ENCODE measurements at regions of chr15 and their contacts with region 1.

Region 1: GRCh38 chr15:71448688-71449114 is 333.4 kb downstream of the THSD4 start:
- DNase-seq: no peak
- H3K4me3 ChIP-seq: no peak overlapping the region
- H3K27ac ChIP-seq: peak overlapping the region; percentile 51
- H3K4me1 ChIP-seq: peaks cover 25% of the 10 kb centered on the region
- H3K27me3 ChIP-seq: no peaks in the 10 kb centered on the region
- CTCF ChIP-seq: peak; percentile 72 to 86 (median 81)
- POLR2A ChIP-seq: no peak

Region 2: DNA sequence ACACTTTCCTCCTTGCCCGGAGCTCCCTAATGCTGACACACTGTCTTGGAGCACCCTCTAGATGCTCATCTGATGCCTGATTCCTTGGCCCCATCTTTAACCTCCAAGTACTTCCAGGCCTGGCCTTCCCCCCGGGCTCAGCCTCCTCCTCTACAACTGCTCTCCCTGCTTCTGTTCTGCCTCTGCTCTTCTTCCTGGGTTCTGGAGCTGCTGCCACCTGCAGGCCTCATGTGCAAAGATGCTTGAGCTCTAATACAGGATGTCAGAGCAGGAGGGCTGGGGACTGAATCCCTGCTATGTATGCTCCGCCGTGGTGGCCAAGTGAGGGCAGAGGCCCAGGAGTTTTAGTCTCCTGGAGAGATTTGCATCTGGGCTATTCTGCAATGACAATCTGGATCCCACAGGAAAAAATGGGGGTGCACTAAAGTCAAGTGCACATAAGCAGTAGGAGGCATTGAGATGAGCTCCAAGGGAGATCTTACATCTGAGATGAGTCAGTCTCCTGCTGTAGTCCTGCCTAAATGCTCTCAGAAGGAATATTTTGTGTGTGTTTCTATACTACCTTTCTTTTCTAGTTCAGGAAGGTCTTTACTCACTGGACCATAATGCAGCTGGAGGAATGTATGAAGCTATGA is 981.7 kb before region 1 on chr15:
- intact Hi-C with region 1: no loop called
- DNase-seq: no peak
- H3K4me3 ChIP-seq: no peak overlapping the region
- H3K27ac ChIP-seq: no peak overlapping the region
- H3K4me1 ChIP-seq: no peaks in the 10 kb centered on the region
- H3K27me3 ChIP-seq: no peaks in the 10 kb centered on the region
- CTCF ChIP-seq: peak in 1 of 3 experiments; percentile 43
- POLR2A ChIP-seq: no peak

Region 3: GRCh38 chr15:71414823-71415222 is 33.9 kb before region 1 on chr15:
- intact Hi-C with region 1: no loop called
- DNase-seq: no peak
- H3K4me3 ChIP-seq: no peak overlapping the region
- H3K27ac ChIP-seq: no peak overlapping the region
- H3K4me1 ChIP-seq: peaks cover 14% of the 10 kb centered on the region
- H3K27me3 ChIP-seq: no peaks in the 10 kb centered on the region
- CTCF ChIP-seq: no peak
- POLR2A ChIP-seq: no peak

Region 4: DNA sequence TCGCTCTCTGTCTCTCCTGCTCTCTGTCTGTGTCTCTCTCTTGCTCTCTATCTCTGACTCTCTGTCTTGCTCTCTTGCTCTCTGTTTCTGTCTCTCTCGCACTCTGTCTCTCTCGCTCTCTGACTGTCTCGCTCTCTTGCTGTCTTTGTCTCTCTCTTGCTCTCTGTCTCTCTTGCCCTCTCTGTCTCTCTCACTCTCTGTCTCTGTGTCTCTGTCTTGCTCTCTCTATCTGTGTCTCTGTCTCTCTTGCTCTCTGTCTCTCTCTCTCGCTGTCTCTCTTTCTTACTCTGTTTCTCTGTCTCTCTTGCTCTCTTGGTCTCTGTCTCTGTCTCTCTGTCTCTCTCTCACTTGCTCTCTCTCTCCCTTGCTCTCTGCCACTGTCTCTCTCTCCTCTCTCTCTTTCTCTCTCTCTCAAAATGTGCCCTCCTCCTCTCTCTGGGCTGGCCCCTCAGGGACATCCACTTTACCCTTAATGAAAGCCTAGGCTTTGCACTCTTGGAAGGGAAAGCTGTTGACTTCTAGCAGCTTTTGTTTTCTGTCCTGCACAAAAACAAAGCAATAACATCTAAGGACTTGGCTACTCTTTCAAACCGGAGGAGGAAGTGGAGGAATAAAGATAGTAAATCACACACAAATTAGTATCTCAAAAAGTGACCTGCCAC is 287.7 kb after region 1 on chr15:
- intact Hi-C with region 1: loop called (anchors 5 kb)
- DNase-seq: no peak
- H3K4me3 ChIP-seq: no peak overlapping the region
- H3K27ac ChIP-seq: peak overlapping the region; percentile 36
- H3K4me1 ChIP-seq: no peaks in the 10 kb centered on the region
- H3K27me3 ChIP-seq: no peaks in the 10 kb centered on the region
- CTCF ChIP-seq: no peak
- POLR2A ChIP-seq: no peak

Region 5: DNA sequence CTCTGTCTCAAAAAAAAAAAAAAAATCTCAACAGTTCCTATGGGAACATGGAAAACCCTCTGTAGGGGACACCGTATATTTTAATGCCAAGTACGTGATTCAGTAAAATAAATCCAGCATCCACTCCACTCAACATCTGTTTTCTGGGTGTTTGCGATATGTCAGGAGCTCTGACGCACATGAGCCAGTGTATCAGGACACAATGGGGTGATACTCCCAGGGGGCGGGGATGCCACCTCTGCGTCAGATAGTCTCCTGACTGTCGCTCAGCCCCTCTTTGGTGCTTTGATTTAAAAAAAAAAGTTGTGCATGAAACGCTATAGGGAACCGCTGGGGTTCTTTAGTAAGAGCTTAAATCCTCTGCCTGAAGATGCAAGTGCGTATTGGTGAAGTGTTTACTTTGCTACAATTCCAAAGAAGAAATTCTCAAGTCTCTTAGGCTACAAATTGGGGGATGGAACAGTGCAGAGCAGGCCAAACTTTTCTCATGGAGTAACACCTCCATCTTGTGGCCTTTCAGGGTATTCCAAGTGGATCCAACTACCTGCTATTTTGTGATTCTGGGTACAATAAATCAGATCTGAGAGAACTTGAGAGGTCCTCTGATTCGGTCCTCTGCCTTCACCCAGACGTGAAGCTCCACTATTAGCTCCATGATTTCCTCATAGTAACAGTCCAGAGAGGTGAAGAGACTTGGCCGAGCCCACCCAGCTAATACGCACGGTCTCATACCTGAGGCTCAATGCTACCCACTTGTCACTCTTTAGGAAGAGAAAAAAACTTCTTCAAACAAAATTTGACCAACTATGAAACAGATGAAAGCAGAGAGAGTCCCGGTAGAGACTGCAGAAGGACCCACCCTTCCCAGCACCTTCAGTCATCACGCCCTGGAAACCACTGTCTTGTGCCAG is 352.4 kb after region 1 on chr15:
- intact Hi-C with region 1: loop called (anchors 10 kb)
- DNase-seq: no peak
- H3K4me3 ChIP-seq: no peak overlapping the region
- H3K27ac ChIP-seq: no peak overlapping the region
- H3K4me1 ChIP-seq: no peaks in the 10 kb centered on the region
- H3K27me3 ChIP-seq: no peaks in the 10 kb centered on the region
- CTCF ChIP-seq: peak; percentile 76 to 91 (median 80)
- POLR2A ChIP-seq: no peak

Region 6: GRCh38 chr15:73114064-73114463 is 1665.4 kb after region 1 on chr15:
- intact Hi-C with region 1: no loop called
- DNase-seq: no peak
- H3K4me3 ChIP-seq: no peak overlapping the region
- H3K27ac ChIP-seq: no peak overlapping the region
- H3K4me1 ChIP-seq: no peaks in the 10 kb centered on the region
- H3K27me3 ChIP-seq: no peaks in the 10 kb centered on the region
- CTCF ChIP-seq: no peak
- POLR2A ChIP-seq: no peak